Right ventricle myocardium inferior (tissue), 1 donor: ENCODE measurements at regions of chr1 and their contacts with region 1.

Region 1: DNA sequence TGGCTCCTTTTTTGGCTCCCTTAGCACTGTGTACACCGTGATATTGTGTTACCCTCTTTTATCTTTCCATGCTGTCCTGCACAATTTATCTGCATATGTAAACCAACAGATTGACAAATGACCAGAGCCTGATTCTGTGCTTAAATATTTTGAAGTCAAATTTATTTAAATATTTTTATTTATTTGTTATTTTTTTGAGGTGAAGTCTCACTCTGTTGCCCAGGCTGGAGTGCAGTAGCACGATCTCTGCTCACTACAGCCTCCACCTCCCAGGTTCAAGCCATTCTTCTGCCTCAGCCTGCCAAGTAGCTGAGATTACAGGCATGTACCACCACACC is 12.8 kb downstream of the PMF1 start:
- DNase-seq: no peak
- ATAC-seq: no peak

Region 2: DNA sequence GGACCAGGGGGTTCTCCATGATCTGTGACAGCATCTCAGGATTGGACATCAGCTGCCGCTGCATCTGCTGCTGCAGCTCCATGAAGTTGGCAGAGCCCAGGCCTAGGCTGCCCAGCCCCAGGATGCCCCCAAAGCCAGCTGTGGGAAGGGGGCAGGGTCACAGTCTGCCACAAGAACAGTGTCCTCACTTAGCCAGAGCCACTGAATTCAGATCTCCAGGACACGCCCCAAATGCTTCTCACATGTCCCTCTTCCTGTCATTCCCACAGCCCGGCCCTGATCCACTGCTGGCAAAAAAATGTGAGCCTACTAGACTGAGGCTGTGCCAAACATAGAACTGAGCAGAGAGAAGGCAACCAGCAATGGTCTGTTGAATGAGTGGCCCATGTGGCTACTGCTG is 175.2 kb before region 1 on chr1:
- intact Hi-C with region 1: no loop called
- DNase-seq: no peak
- ATAC-seq: no peak

Region 3: GRCh38 chr1:156090822-156091188 is 134.8 kb before region 1 on chr1:
- intact Hi-C with region 1: loop called (anchors 1 kb)
- DNase-seq: peak; percentile 93
- ATAC-seq: peak; percentile 80

Region 4: GRCh38 chr1:156146020-156146768 is 79.5 kb before region 1 on chr1:
- intact Hi-C with region 1: loop called (anchors 1 kb)
- DNase-seq: peak; percentile 78
- ATAC-seq: peak; percentile 68

Region 5: GRCh38 chr1:156165083-156165482 is 60.6 kb before region 1 on chr1:
- intact Hi-C with region 1: no loop called
- DNase-seq: no peak
- ATAC-seq: no peak